CD4-positive, alpha-beta T cell (primary cell): ENCODE measurements at regions of chr21 and their contacts with region 1.

Region 1: GRCh38 chr21:14675774-14676530 is 129.8 kb upstream of the SAMSN1 start:
- DNase-seq: peak in 12 of 14 experiments; percentile 0 to 78 (median 16)
- ATAC-seq: peak; percentile 88
- H3K4me3 ChIP-seq: peak overlapping the region; percentile 4
- H3K4me3 Mint-ChIP-seq: peak overlapping the region; percentile 42
- H3K27ac ChIP-seq: peak overlapping the region; percentile 60 to 77
- H3K27ac Mint-ChIP-seq: peak overlapping the region; percentile 97
- H3K4me1 ChIP-seq: peaks cover 22% of the 10 kb centered on the region
- H3K4me1 Mint-ChIP-seq: peaks cover 50% of the 10 kb centered on the region
- H3K27me3 ChIP-seq: no peaks in the 10 kb centered on the region
- H3K27me3 Mint-ChIP-seq: no peaks in the 10 kb centered on the region
- CTCF ChIP-seq: no peak

Region 2: GRCh38 chr21:14382835-14383594 is 292.9 kb before region 1 on chr21 and contains the start of gene HSPA13:
- CTCF ChIA-PET with region 1: no interaction called
- POLR2A ChIA-PET with region 1: interaction called, 5 read pairs
- intact Hi-C with region 1: loop called in 1 of 2 experiments (anchors 2 kb)
- DNase-seq: peak; percentile 95 to 100 (median 98)
- ATAC-seq: peak; percentile 93
- H3K4me3 ChIP-seq: peak within 1 kb of the TSS; percentile 80
- H3K4me3 Mint-ChIP-seq: peak within 1 kb of the TSS; percentile 96
- H3K27ac ChIP-seq: peak within 1 kb of the TSS; percentile 86
- H3K27ac Mint-ChIP-seq: peak within 1 kb of the TSS; percentile 97
- H3K4me1 ChIP-seq: peaks cover 17% of the 10 kb centered on the region
- H3K4me1 Mint-ChIP-seq: peaks cover 44% of the 10 kb centered on the region
- H3K27me3 ChIP-seq: no peaks in the 10 kb centered on the region
- H3K27me3 Mint-ChIP-seq: no peaks in the 10 kb centered on the region
- CTCF ChIP-seq: no peak
- total RNA-seq, gene HSPA13: 39.6 to 41.4 TPM

Region 3: GRCh38 chr21:14523234-14523633 is 152.7 kb before region 1 on chr21:
- CTCF ChIA-PET with region 1: no interaction called
- POLR2A ChIA-PET with region 1: interaction called, 3 read pairs
- intact Hi-C with region 1: loop called in 1 of 2 experiments (anchors 5 kb)
- DNase-seq: peak in 4 of 14 experiments; percentile 7 to 59 (median 50)
- ATAC-seq: peak; percentile 57
- H3K4me3 ChIP-seq: peak overlapping the region; percentile 17
- H3K4me3 Mint-ChIP-seq: peak overlapping the region; percentile 75
- H3K27ac ChIP-seq: no peak overlapping the region
- H3K27ac Mint-ChIP-seq: peak overlapping the region; percentile 35
- H3K4me1 ChIP-seq: peaks cover 25% of the 10 kb centered on the region
- H3K4me1 Mint-ChIP-seq: peaks cover 79% of the 10 kb centered on the region
- H3K27me3 ChIP-seq: no peaks in the 10 kb centered on the region
- H3K27me3 Mint-ChIP-seq: no peaks in the 10 kb centered on the region
- CTCF ChIP-seq: no peak

Region 4: GRCh38 chr21:14657241-14658008 is 18.5 kb before region 1 on chr21:
- CTCF ChIA-PET with region 1: no interaction called
- POLR2A ChIA-PET with region 1: no interaction called
- intact Hi-C with region 1: loop called in 1 of 2 experiments (anchors 1 kb)
- DNase-seq: no peak
- ATAC-seq: no peak
- H3K4me3 ChIP-seq: no peak overlapping the region
- H3K4me3 Mint-ChIP-seq: no peak overlapping the region
- H3K27ac ChIP-seq: no peak overlapping the region
- H3K27ac Mint-ChIP-seq: no peak overlapping the region
- H3K4me1 ChIP-seq: no peaks in the 10 kb centered on the region
- H3K4me1 Mint-ChIP-seq: peaks cover 8% of the 10 kb centered on the region
- H3K27me3 ChIP-seq: no peaks in the 10 kb centered on the region
- H3K27me3 Mint-ChIP-seq: no peaks in the 10 kb centered on the region
- CTCF ChIP-seq: no peak

Region 5: GRCh38 chr21:14686466-14687267 is 10.7 kb after region 1 on chr21:
- CTCF ChIA-PET with region 1: no interaction called
- POLR2A ChIA-PET with region 1: interaction called, 13 read pairs
- intact Hi-C with region 1: no loop called
- DNase-seq: peak in 2 of 14 experiments; percentile 24 to 51
- ATAC-seq: no peak
- H3K4me3 ChIP-seq: peak overlapping the region; percentile 6
- H3K4me3 Mint-ChIP-seq: no peak overlapping the region
- H3K27ac ChIP-seq: no peak overlapping the region
- H3K27ac Mint-ChIP-seq: no peak overlapping the region
- H3K4me1 ChIP-seq: peaks cover 13% of the 10 kb centered on the region
- H3K4me1 Mint-ChIP-seq: peaks cover 34% of the 10 kb centered on the region
- H3K27me3 ChIP-seq: no peaks in the 10 kb centered on the region
- H3K27me3 Mint-ChIP-seq: no peaks in the 10 kb centered on the region
- CTCF ChIP-seq: no peak